Activated CD4-positive, alpha-beta T cell treated with anti-CD3 and anti-CD28 coated beads, Interleukin-2, amount 10 ng/mL, durations not matched to agents 7 days and 5 days (primary cell): ENCODE measurements at regions of chr6 and their contacts with region 1.

Region 1: DNA sequence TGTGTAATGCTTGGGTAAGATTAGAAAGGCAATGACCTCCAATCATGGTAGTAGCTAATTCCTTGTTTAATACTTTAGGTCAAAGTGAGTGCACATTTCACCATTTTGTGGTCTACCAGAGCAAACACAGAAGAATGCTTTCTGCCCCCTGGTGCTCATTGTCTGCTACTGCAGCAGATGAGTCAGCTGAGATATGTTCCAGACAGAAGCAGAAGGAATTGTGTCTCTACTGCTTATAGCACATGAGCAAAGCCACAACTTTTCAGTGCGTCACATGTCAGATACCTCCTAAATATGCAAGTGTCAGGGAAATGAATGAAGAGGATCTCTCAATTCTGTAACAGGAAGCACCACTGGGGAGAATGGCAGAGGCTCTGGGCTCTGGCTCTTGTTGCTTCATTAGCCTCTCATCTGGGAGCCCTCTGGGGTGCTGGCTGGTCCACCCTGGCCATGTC is 308.9 kb downstream of the ALDH8A1 start:
- DNase-seq: peak; percentile 81
- H3K4me3 Mint-ChIP-seq: no peak overlapping the region
- H3K27ac Mint-ChIP-seq: no peak overlapping the region
- H3K4me1 Mint-ChIP-seq: peaks cover 11% of the 10 kb centered on the region
- H3K27me3 Mint-ChIP-seq: no peaks in the 10 kb centered on the region

Region 2: GRCh38 chr6:134174672-134175198 is 466.3 kb before region 1 on chr6:
- CTCF ChIA-PET with region 1: interaction called, 11 read pairs
- POLR2A ChIA-PET with region 1: no interaction called
- DNase-seq: peak; percentile 90
- H3K4me3 Mint-ChIP-seq: peak overlapping the region; percentile 97
- H3K27ac Mint-ChIP-seq: peak overlapping the region; percentile 97
- H3K4me1 Mint-ChIP-seq: peaks cover 55% of the 10 kb centered on the region
- H3K27me3 Mint-ChIP-seq: peaks cover 13% of the 10 kb centered on the region

Region 3: GRCh38 chr6:134447883-134448387 is 193.1 kb before region 1 on chr6:
- CTCF ChIA-PET with region 1: no interaction called
- POLR2A ChIA-PET with region 1: no interaction called
- DNase-seq: no peak
- H3K4me3 Mint-ChIP-seq: no peak overlapping the region
- H3K27ac Mint-ChIP-seq: no peak overlapping the region
- H3K4me1 Mint-ChIP-seq: no peaks in the 10 kb centered on the region
- H3K27me3 Mint-ChIP-seq: no peaks in the 10 kb centered on the region

Region 4: GRCh38 chr6:134621858-134622257 is 19.1 kb before region 1 on chr6:
- CTCF ChIA-PET with region 1: interaction called, 14 read pairs
- POLR2A ChIA-PET with region 1: no interaction called
- DNase-seq: no peak
- H3K4me3 Mint-ChIP-seq: no peak overlapping the region
- H3K27ac Mint-ChIP-seq: no peak overlapping the region
- H3K4me1 Mint-ChIP-seq: no peaks in the 10 kb centered on the region
- H3K27me3 Mint-ChIP-seq: peaks cover 8% of the 10 kb centered on the region